ENCODE measurements at regions of chr1 and their contacts with region 1.

Region 1: DNA sequence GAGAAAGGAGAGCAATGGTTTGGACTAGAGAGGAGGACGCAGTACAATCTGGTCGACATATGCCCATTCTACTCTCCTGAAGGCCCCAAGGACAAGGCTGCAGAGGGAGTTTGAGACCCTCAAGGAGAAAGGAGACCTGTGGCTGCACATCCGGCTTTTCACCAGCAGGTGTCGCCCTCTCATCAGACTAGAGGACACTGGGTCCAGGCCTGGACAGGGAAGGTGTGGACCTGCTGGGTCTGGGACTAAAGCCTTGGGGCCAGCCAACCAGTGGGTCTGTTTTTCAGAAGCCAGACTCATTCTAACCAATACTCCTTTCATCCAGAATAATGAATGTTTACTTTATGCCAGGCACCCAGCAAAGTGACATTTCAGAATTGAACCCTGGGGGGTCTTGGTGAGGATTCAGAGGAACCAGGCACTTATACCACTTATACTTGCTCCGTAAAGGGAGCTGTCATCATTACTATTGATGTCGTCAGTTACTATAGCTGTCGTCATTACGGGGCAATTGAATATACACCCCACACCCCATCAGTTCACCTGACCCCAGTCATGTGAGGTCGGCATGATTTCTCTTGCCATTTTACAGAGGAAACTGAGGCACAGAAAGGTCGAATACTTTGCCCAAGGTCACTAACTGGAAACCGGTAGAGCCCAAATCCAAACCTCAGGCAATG is 5.1 kb downstream of the SRARP start:
- DNase-seq: peak; percentile 33 to 74 (median 54)
- ATAC-seq: peak; percentile 73
- H3K4me3 ChIP-seq: no peak overlapping the region
- H3K4me3 Mint-ChIP-seq: no peak overlapping the region
- H3K27ac ChIP-seq: no peak overlapping the region
- H3K27ac Mint-ChIP-seq: no peak overlapping the region
- H3K4me1 ChIP-seq: peaks cover 0 to 6% of the 10 kb centered on the region in 2 donors
- H3K4me1 Mint-ChIP-seq: peaks cover 0 to 21% (median 5%) of the 10 kb centered on the region in 7 donors
- H3K27me3 ChIP-seq: no peaks in the 10 kb centered on the region
- H3K27me3 Mint-ChIP-seq: peaks cover 0 to 17% (median 0%) of the 10 kb centered on the region in 5 donors

Region 2: DNA sequence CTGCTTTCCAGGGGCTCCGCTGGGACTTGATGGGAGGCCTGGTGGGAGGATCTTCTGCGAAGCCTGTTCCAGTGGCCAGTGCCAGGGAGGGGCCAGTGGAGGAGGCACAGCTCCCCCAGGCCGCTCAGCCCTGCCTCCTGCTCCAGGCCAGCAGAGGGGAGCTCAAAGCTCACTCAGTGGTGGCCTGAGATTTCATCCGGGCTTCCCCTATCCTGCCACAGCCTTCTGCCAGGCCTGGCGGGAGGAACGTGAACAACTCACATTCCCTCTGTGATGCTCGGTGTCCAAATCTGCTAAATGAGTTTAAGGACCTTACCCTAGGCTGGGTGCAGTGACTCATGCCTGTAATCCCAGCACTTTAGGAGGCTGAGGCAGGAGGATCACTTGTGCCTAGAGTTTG is 37.7 kb after region 1 on chr1:
- CTCF ChIA-PET with region 1: interaction called, 10 read pairs
- POLR2A ChIA-PET with region 1: interaction called, 3 read pairs
- intact Hi-C with region 1: no loop called
- DNase-seq: no peak
- ATAC-seq: no peak
- H3K4me3 ChIP-seq: no peak overlapping the region
- H3K4me3 Mint-ChIP-seq: peak overlapping the region in 1 of 10 donors; percentile 72
- H3K27ac ChIP-seq: no peak overlapping the region
- H3K27ac Mint-ChIP-seq: no peak overlapping the region
- H3K4me1 ChIP-seq: no peaks in the 10 kb centered on the region
- H3K4me1 Mint-ChIP-seq: peaks cover 0 to 7% (median 0%) of the 10 kb centered on the region in 7 donors
- H3K27me3 ChIP-seq: no peaks in the 10 kb centered on the region
- H3K27me3 Mint-ChIP-seq: peaks cover 0 to 19% (median 13%) of the 10 kb centered on the region in 5 donors

Region 3: GRCh38 chr1:16055613-16056520 is 46.7 kb after region 1 on chr1:
- CTCF ChIA-PET with region 1: interaction called, 10 read pairs
- POLR2A ChIA-PET with region 1: no interaction called
- intact Hi-C with region 1: loop called (anchors 1 kb)
- DNase-seq: peak; percentile 71 to 87 (median 78)
- ATAC-seq: peak; percentile 97
- H3K4me3 ChIP-seq: no peak overlapping the region
- H3K4me3 Mint-ChIP-seq: peak overlapping the region in 2 of 10 donors; percentile 17 to 43
- H3K27ac ChIP-seq: no peak overlapping the region
- H3K27ac Mint-ChIP-seq: peak overlapping the region in 4 of 9 donors; percentile 45 to 76 (median 68)
- H3K4me1 ChIP-seq: no peaks in the 10 kb centered on the region
- H3K4me1 Mint-ChIP-seq: peaks cover 5 to 6% (median 6%) of the 10 kb centered on the region in 7 donors
- H3K27me3 ChIP-seq: no peaks in the 10 kb centered on the region
- H3K27me3 Mint-ChIP-seq: peaks cover 0 to 4% (median 0%) of the 10 kb centered on the region in 5 donors

Region 4: GRCh38 chr1:16243936-16244649 is 234.9 kb after region 1 on chr1:
- CTCF ChIA-PET with region 1: no interaction called
- POLR2A ChIA-PET with region 1: no interaction called
- intact Hi-C with region 1: loop called (anchors 1 to 5 kb)
- DNase-seq: peak; percentile 38 to 77 (median 68)
- ATAC-seq: peak; percentile 94
- H3K4me3 ChIP-seq: no peak overlapping the region
- H3K4me3 Mint-ChIP-seq: no peak overlapping the region
- H3K27ac ChIP-seq: no peak overlapping the region
- H3K27ac Mint-ChIP-seq: peak overlapping the region in 4 of 9 donors; percentile 21 to 92 (median 65)
- H3K4me1 ChIP-seq: peaks cover 0 to 5% of the 10 kb centered on the region in 2 donors
- H3K4me1 Mint-ChIP-seq: peaks cover 9 to 21% (median 17%) of the 10 kb centered on the region in 7 donors
- H3K27me3 ChIP-seq: no peaks in the 10 kb centered on the region
- H3K27me3 Mint-ChIP-seq: no peaks in the 10 kb centered on the region

Measured in naive thymus-derived CD4-positive, alpha-beta T cell (primary cell).